HepG2 (cell line): ENCODE measurements at regions of chr9 and their contacts with region 1.

Region 1: DNA sequence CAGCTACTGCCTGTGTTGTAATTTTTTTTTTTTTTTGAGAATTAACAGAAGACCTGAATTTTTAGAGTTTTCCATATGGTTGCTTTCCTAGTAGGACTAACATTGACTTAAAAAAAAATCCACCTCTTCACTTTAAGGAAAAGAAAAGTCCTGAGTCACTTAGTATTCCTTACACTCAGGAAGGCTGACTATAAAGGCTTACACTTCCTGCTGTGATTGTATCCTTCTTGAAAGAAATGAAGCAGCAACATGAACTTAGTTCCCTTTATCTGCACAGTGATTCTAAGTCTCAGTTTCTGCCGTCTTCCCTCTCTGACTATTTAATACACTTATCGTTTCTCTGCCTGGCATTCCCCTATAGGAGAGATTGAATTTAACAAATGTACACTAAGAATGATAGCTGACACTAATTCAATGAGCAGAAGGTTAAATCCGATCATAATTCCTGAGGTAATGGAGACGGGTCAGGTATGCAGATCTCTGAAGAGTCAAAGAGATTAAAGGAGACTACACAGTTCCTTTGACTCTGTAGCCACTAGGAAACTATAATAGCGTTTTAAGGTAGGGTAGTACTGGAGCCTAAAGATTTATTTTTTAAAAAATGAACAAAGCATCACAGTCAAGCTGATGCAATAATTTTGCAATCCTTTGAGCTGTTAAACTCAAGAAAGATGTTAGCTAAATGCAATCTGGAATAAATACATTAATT is 185.1 kb upstream of the ELAVL2 start:
- DNase-seq: no peak
- ATAC-seq: no peak
- H3K4me3 ChIP-seq: no peak overlapping the region
- H3K27ac ChIP-seq: no peak overlapping the region
- H3K4me1 ChIP-seq: no peaks in the 10 kb centered on the region
- H3K27me3 ChIP-seq: no peaks in the 10 kb centered on the region
- CTCF ChIP-seq: no peak
- EP300 ChIP-seq: no peak
- POLR2A ChIP-seq: no peak
- RAD21 ChIP-seq: no peak

Region 2: DNA sequence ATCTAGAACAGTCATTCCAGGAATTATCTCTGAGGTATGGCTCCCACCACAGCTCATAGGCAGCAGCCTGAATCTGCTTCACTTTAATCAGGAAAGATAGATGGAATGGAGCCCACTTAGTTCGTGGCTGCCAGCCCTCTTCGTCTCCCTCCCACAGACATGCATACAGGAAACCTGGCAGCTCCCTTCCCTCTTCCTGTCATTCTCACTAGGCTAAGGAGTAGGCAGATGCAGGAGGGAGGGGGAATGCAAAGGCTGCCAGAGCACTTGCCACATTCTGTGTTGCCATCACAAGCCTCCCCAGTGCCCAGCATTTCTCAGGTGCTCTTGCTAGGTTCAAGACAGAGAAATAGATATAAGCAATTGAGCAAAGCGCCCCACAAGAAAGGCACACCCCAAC is 564.0 kb before region 1 on chr9:
- CTCF ChIA-PET with region 1: no interaction called
- POLR2A ChIA-PET with region 1: no interaction called
- in situ Hi-C with region 1: no loop called
- intact Hi-C with region 1: no loop called
- DNase-seq: no peak
- ATAC-seq: no peak
- H3K4me3 ChIP-seq: no peak overlapping the region
- H3K27ac ChIP-seq: no peak overlapping the region
- H3K4me1 ChIP-seq: no peaks in the 10 kb centered on the region
- H3K27me3 ChIP-seq: no peaks in the 10 kb centered on the region
- CTCF ChIP-seq: no peak
- EP300 ChIP-seq: no peak
- POLR2A ChIP-seq: no peak
- RAD21 ChIP-seq: no peak

Region 3: DNA sequence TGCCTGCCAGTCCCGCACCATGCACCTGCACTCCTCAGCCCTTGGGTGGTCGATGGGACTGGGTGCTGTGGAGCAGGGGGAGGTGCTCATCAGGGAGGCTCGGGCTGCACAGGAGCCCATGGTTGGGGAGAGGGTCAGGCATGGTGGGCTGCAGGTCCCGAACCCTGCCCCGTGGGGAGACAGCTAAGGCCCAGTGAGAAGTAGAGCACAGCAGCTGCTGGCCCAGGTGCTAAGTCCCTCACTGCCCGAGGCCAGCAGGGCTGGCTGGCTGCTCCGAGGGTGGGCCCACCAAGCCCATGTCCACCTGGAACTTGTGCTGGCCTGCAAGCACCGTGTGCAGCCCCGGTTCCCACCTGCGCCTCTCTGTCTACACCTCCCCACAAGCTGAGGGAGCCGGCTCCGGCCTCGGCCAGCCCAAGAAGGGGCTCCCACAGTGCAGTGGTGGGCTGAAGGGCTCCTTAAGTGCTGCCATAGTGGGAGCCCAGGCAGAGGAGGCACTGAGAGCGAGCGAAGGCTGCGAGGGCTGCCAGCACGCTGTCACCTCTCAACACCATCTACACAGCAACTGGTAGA is 96.6 kb before region 1 on chr9:
- CTCF ChIA-PET with region 1: no interaction called
- POLR2A ChIA-PET with region 1: no interaction called
- in situ Hi-C with region 1: loop called (anchors 25 kb)
- intact Hi-C with region 1: no loop called
- DNase-seq: no peak
- ATAC-seq: no peak
- H3K4me3 ChIP-seq: no peak overlapping the region
- H3K27ac ChIP-seq: no peak overlapping the region
- H3K4me1 ChIP-seq: no peaks in the 10 kb centered on the region
- H3K27me3 ChIP-seq: no peaks in the 10 kb centered on the region
- CTCF ChIP-seq: no peak
- EP300 ChIP-seq: no peak
- POLR2A ChIP-seq: no peak
- RAD21 ChIP-seq: no peak

Region 4: GRCh38 chr9:24036459-24036858 is 25.3 kb after region 1 on chr9:
- CTCF ChIA-PET with region 1: no interaction called
- POLR2A ChIA-PET with region 1: no interaction called
- in situ Hi-C with region 1: no loop called
- intact Hi-C with region 1: no loop called
- DNase-seq: no peak
- ATAC-seq: no peak
- H3K4me3 ChIP-seq: no peak overlapping the region
- H3K27ac ChIP-seq: no peak overlapping the region
- H3K4me1 ChIP-seq: no peaks in the 10 kb centered on the region
- H3K27me3 ChIP-seq: no peaks in the 10 kb centered on the region
- CTCF ChIP-seq: no peak
- EP300 ChIP-seq: no peak
- POLR2A ChIP-seq: no peak
- RAD21 ChIP-seq: no peak